GM10248 (cell line): ENCODE measurements at regions of chr6 and their contacts with region 1.

Region 1: GRCh38 chr6:31769684-31770371 is 7.3 kb downstream of the VWA7 start:
- DNase-seq: peak; percentile 92
- CTCF ChIP-seq: peak; percentile 69

Region 2: GRCh38 chr6:31657406-31658157 is 112.2 kb before region 1 on chr6:
- CTCF ChIA-PET with region 1: no interaction called
- POLR2A ChIA-PET with region 1: no interaction called
- DNase-seq: no peak
- CTCF ChIP-seq: no peak

Region 3: GRCh38 chr6:31680840-31681671 is 88.8 kb before region 1 on chr6 and contains the start of gene LY6G5C:
- CTCF ChIA-PET with region 1: interaction called, 12 read pairs
- POLR2A ChIA-PET with region 1: no interaction called
- DNase-seq: peak; percentile 83
- CTCF ChIP-seq: peak; percentile 77

Region 4: GRCh38 chr6:31729515-31729978 is 40.3 kb before region 1 on chr6:
- CTCF ChIA-PET with region 1: interaction called, 73 read pairs
- POLR2A ChIA-PET with region 1: interaction called, 3 read pairs
- DNase-seq: peak; percentile 79
- CTCF ChIP-seq: peak; percentile 87

Region 5: DNA sequence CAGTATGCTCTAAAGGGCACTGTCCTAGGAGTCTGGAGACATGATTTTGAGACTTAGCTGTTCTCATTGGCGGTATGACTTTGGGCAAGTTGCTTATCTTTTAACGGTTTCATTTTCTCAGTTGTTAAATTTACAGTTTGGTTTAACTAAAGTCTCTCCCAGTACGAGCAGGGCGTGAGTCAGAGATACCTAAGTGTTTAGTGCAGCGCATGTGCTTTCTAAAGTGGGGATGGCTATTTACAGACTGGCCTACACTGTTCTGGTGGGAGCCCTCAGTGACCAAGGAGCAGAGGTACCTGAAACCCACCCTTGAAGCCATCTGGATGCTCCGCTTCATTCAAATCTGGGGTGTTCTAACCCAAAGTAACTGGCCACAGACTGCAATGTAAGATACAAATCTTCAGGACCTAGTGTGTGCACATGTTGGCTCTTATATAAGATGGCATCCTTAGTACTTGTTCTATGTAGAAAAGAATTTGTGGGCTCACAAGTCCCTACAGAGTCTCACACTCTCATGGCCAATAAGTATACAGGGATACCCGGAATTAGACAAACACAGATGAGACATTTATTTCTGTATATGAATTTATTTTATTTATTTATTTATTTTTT is 19.3 kb before region 1 on chr6:
- CTCF ChIA-PET with region 1: interaction called, 14 read pairs
- POLR2A ChIA-PET with region 1: no interaction called
- DNase-seq: no peak
- CTCF ChIP-seq: no peak

Region 6: DNA sequence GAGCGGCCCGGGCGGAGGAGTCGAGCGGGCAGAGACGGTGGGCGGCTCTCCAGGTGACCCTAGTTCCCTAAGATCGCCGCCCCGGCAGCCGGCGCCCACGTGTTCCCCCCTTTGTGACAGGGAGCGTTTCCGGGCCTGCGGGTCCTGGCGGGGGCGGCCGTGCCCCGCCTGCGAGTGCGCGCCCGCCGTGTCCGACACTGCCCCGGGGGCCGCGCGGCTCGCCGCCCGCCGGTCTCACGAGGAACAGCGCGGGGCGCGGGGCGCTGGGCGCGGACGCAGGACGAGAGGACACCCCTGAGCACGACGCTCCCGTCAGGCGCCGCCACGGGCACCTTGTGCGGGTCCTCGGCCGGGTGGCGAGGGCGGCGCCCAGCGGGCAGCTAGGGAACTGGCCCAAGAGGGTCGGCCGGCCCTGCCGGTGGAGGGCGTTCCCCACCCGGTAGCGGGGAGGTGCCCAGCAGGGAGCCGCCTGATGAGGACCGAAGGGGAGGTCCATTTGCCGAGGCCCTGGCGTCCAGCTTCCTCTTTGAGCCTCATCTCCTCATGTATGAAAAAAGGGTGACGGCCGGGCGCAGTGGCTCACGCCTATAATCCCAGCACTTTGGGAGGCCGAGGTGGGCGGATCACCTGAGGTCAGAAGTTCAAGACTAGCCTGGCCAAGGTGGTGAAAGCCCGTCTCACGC is 25.9 kb after region 1 on chr6 and contains the start of gene VARS1:
- CTCF ChIA-PET with region 1: interaction called, 12 read pairs
- POLR2A ChIA-PET with region 1: interaction called, 4 read pairs
- DNase-seq: peak; percentile 97
- CTCF ChIP-seq: peak; percentile 86

Region 7: GRCh38 chr6:32355018-32355417 is 585.2 kb after region 1 on chr6:
- CTCF ChIA-PET with region 1: no interaction called
- POLR2A ChIA-PET with region 1: no interaction called
- DNase-seq: no peak
- CTCF ChIP-seq: no peak